ENCODE measurements at regions of chr19 and their contacts with region 1.

Region 1: DNA sequence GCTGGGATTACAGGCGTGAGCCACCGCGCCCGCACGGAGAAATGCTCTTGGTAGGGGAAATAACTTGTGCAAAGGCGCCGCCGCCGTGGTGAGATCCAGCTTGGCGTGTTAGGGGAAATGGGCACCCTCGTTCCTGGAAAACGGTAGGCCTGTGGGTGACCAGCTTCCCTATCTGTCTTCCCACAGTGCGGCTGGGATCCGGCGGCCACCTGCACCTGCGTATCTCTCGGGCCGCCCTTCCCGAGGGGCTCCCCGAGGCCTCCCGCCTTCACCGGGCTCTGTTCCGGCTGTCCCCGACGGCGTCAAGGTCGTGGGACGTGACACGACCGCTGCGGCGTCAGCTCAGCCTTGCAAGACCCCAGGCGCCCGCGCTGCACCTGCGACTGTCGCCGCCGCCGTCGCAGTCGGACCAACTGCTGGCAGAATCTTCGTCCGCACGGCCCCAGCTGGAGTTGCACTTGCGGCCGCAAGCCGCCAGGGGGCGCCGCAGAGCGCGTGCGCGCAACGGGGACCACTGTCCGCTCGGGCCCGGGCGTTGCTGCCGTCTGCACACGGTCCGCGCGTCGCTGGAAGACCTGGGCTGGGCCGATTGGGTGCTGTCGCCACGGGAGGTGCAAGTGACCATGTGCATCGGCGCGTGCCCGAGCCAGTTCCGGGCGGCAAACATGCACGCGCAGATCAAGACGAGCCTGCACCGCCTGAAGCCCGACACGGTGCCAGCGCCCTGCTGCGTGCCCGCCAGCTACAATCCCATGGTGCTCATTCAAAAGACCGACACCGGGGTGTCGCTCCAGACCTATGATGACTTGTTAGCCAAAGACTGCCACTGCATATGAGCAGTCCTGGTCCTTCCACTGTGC is 2.4 kb downstream of the GDF15 start:
- DNase-seq: peak; percentile 93 to 97 (median 96)
- H3K4me3 ChIP-seq: peak overlapping the region; percentile 13 to 68 (median 36)
- H3K4me3 Mint-ChIP-seq: peak overlapping the region; percentile 80 to 90
- H3K27ac ChIP-seq: peak overlapping the region; percentile 18 to 66
- H3K27ac Mint-ChIP-seq: peak overlapping the region; percentile 78 to 93 (median 90)
- H3K4me1 ChIP-seq: peaks cover 65 to 78% of the 10 kb centered on the region in 2 donors
- H3K4me1 Mint-ChIP-seq: peaks cover 68% of the 10 kb centered on the region
- H3K27me3 ChIP-seq: peaks cover 0 to 12% of the 10 kb centered on the region in 2 donors
- H3K27me3 Mint-ChIP-seq: peaks cover 3 to 35% (median 18%) of the 10 kb centered on the region in 3 donors
- CTCF ChIP-seq: peak; percentile 100

Region 2: DNA sequence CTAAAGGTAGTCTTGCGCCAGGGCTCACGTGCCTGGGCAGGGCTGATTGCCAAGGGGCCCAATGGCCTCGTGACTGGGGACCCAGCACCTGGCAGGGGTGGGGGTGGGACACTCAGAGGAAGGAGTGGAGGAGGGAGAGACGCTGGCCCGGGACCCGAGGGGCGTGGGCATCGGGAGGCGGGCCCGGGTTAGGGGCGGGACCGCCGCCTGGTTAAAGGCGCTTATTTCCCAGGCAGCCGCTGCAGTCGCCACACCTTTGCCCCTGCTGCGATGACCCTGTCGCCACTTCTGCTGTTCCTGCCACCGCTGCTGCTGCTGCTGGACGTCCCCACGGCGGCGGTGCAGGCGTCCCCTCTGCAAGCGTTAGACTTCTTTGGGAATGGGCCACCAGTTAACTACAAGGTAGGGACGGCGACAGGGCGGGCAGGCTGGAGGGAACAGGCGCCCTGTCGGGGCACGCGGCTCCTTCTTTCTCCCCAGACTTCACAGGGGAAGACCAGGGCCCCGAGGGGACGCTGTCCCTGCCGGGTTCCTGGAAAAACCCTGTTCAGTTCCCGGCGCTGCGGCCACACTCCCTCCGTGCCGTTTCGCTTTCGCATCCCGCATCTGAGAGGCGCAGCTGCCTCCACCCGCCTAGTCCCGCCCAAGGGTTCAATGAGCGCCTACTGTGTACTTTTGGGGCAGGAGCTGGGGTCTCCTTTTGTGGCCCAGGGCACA is 214.6 kb before region 1 on chr19 and contains the start of gene IFI30:
- intact Hi-C with region 1: loop called in 1 of 2 experiments (anchors 5 kb)
- DNase-seq: peak; percentile 91 to 95 (median 92)
- H3K4me3 ChIP-seq: peak within 1 kb of the TSS; percentile 58 to 100 (median 86)
- H3K4me3 Mint-ChIP-seq: peak within 1 kb of the TSS; percentile 95 to 98
- H3K27ac ChIP-seq: peak within 1 kb of the TSS; percentile 99
- H3K27ac Mint-ChIP-seq: peak within 1 kb of the TSS; percentile 100
- H3K4me1 ChIP-seq: peaks cover 85 to 88% of the 10 kb centered on the region in 2 donors
- H3K4me1 Mint-ChIP-seq: peaks cover 75% of the 10 kb centered on the region
- H3K27me3 ChIP-seq: no peaks in the 10 kb centered on the region
- H3K27me3 Mint-ChIP-seq: no peaks in the 10 kb centered on the region
- CTCF ChIP-seq: no peak
- polyA plus RNA-seq, gene IFI30: 3,608 to 6,022 (median 4,550) TPM

Region 3: GRCh38 chr19:18349524-18350128 is 38.7 kb before region 1 on chr19:
- intact Hi-C with region 1: loop called (anchors 5 kb)
- DNase-seq: peak; percentile 53 to 67 (median 54)
- H3K4me3 ChIP-seq: no peak overlapping the region
- H3K4me3 Mint-ChIP-seq: no peak overlapping the region
- H3K27ac ChIP-seq: no peak overlapping the region
- H3K27ac Mint-ChIP-seq: no peak overlapping the region
- H3K4me1 ChIP-seq: peaks cover 0 to 3% of the 10 kb centered on the region in 2 donors
- H3K4me1 Mint-ChIP-seq: peaks cover 13% of the 10 kb centered on the region
- H3K27me3 ChIP-seq: no peaks in the 10 kb centered on the region
- H3K27me3 Mint-ChIP-seq: peaks cover 0 to 1% (median 0%) of the 10 kb centered on the region in 3 donors
- CTCF ChIP-seq: peak; percentile 77

Region 4: GRCh38 chr19:18401580-18402112 is 13.3 kb after region 1 on chr19:
- intact Hi-C with region 1: loop called (anchors 1 to 2 kb)
- DNase-seq: peak; percentile 96 to 97 (median 97)
- H3K4me3 ChIP-seq: peak overlapping the region in 1 of 3 experiments; percentile 70
- H3K4me3 Mint-ChIP-seq: peak overlapping the region; percentile 71 to 84
- H3K27ac ChIP-seq: peak overlapping the region; percentile 61 to 84
- H3K27ac Mint-ChIP-seq: peak overlapping the region; percentile 89 to 96 (median 94)
- H3K4me1 ChIP-seq: peaks cover 70 to 78% of the 10 kb centered on the region in 2 donors
- H3K4me1 Mint-ChIP-seq: peaks cover 61% of the 10 kb centered on the region
- H3K27me3 ChIP-seq: no peaks in the 10 kb centered on the region
- H3K27me3 Mint-ChIP-seq: peaks cover 0 to 3% (median 0%) of the 10 kb centered on the region in 3 donors
- CTCF ChIP-seq: peak; percentile 62

Region 5: GRCh38 chr19:18408053-18408476 is 19.7 kb after region 1 on chr19:
- intact Hi-C with region 1: loop called (anchors 2 kb)
- DNase-seq: peak; percentile 35 to 59 (median 58)
- H3K4me3 ChIP-seq: no peak overlapping the region
- H3K4me3 Mint-ChIP-seq: no peak overlapping the region
- H3K27ac ChIP-seq: no peak overlapping the region
- H3K27ac Mint-ChIP-seq: peak overlapping the region in 3 of 7 donors; percentile 35 to 62 (median 45)
- H3K4me1 ChIP-seq: peaks cover 20 to 32% of the 10 kb centered on the region in 2 donors
- H3K4me1 Mint-ChIP-seq: peaks cover 31% of the 10 kb centered on the region
- H3K27me3 ChIP-seq: no peaks in the 10 kb centered on the region
- H3K27me3 Mint-ChIP-seq: peaks cover 2 to 6% (median 6%) of the 10 kb centered on the region in 3 donors
- CTCF ChIP-seq: peak; percentile 75

Region 6: DNA sequence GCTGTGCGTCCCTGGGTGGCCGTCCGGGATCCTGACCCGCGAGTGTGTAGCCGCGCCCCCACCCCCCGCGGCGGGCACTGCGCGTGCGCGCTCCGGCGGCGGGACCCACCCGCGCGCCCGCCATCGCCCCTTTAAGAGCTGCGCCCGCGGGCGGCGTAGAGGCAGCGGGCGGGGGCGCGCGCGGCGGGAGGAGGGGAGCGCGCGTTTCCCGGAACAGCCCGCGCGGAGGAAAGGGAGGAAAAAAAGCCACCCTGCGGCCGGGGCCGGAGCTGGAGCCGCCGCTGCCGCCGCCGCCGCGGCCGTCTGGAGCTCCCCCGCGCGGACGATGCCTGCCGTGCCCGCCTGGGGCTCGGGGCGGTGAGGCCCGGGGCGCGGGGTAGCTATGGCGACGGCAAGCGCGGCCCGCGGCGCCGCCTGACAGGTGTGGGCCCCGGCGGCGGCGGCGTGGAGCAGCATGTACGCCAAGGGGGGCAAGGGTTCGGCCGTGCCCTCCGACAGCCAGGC is 30.9 kb after region 1 on chr19 and contains the start of gene SSBP4:
- intact Hi-C with region 1: loop called in 1 of 2 experiments (anchors 2 kb)
- DNase-seq: peak; percentile 64 to 69 (median 69)
- H3K4me3 ChIP-seq: peak within 1 kb of the TSS; percentile 49 to 74 (median 59)
- H3K4me3 Mint-ChIP-seq: peak within 1 kb of the TSS; percentile 83 to 91
- H3K27ac ChIP-seq: peak within 1 kb of the TSS; percentile 99
- H3K27ac Mint-ChIP-seq: peak within 1 kb of the TSS; percentile 93 to 100 (median 97)
- H3K4me1 ChIP-seq: peaks cover 67 to 85% of the 10 kb centered on the region in 2 donors
- H3K4me1 Mint-ChIP-seq: peaks cover 75% of the 10 kb centered on the region
- H3K27me3 ChIP-seq: no peaks in the 10 kb centered on the region
- H3K27me3 Mint-ChIP-seq: peaks cover 0 to 6% (median 2%) of the 10 kb centered on the region in 3 donors
- CTCF ChIP-seq: peak; percentile 64
- polyA plus RNA-seq, gene SSBP4: 38.5 to 74.5 (median 48.3) TPM

Measured in CD14-positive monocyte (primary cell).